Dorsolateral prefrontal cortex (tissue), 120 donors: ENCODE measurements at regions of chr18 and their contacts with region 1.

Region 1: GRCh38 chr18:21955757-21956652 is 213.4 kb upstream of the GATA6 start:
- DNase-seq: peak; percentile 58 to 83 (median 68)
- H3K4me3 ChIP-seq: no peak overlapping the region
- H3K27ac ChIP-seq: no peak overlapping the region
- H3K27me3 ChIP-seq: peaks cover 0 to 5% (median 0%) of the 10 kb centered on the region in 45 donors
- CTCF ChIP-seq: peak; percentile 55 to 94 (median 86)

Region 2: GRCh38 chr18:21897811-21898210 is 58.2 kb before region 1 on chr18:
- intact Hi-C with region 1: loop called in 1 of 2 experiments (anchors 5 kb)
- DNase-seq: peak in 2 of 10 donors; percentile 7 to 12
- H3K4me3 ChIP-seq: no peak overlapping the region
- H3K27ac ChIP-seq: no peak overlapping the region
- H3K27me3 ChIP-seq: peaks cover 0 to 22% (median 0%) of the 10 kb centered on the region in 45 donors
- CTCF ChIP-seq: peak; percentile 28 to 76 (median 66)